ENCODE measurements at regions of chrX and their contacts with region 1.

Region 1: GRCh38 chrX:153580700-153581386 is 18.1 kb downstream of the CCNQ start:
- DNase-seq: peak in 1 of 2 experiments; percentile 76
- H3K4me3 ChIP-seq: no peak overlapping the region
- H3K27ac ChIP-seq: no peak overlapping the region
- H3K4me1 ChIP-seq: peaks cover 0 to 11% (median 1%) of the 10 kb centered on the region in 4 experiments; a peak in 3 of 7 replicates
- H3K27me3 ChIP-seq: no peaks in the 10 kb centered on the region
- CTCF ChIP-seq: peak in 2 of 3 experiments; percentile 44 to 65; a peak in 3 of 4 replicates
- EP300 ChIP-seq: no peak
- POLR2A ChIP-seq: no peak
- RAD21 ChIP-seq: peak; percentile 34 to 53

Region 2: GRCh38 chrX:153564051-153564736 is 16.6 kb before region 1 on chrX:
- CTCF ChIA-PET with region 1: interaction called, 25 read pairs
- POLR2A ChIA-PET with region 1: interaction called, 3 read pairs
- DNase-seq: no peak
- H3K4me3 ChIP-seq: no peak overlapping the region
- H3K27ac ChIP-seq: no peak overlapping the region
- H3K4me1 ChIP-seq: peaks cover 0 to 15% (median 5%) of the 10 kb centered on the region in 4 experiments; a peak in 5 of 7 replicates
- H3K27me3 ChIP-seq: no peaks in the 10 kb centered on the region; a peak in 1 of 7 replicates
- CTCF ChIP-seq: no peak
- EP300 ChIP-seq: no peak
- POLR2A ChIP-seq: no peak
- RAD21 ChIP-seq: no peak

Measured in H1 (cell line).